ENCODE measurements at regions of chr20 and their contacts with region 1.

Region 1: DNA sequence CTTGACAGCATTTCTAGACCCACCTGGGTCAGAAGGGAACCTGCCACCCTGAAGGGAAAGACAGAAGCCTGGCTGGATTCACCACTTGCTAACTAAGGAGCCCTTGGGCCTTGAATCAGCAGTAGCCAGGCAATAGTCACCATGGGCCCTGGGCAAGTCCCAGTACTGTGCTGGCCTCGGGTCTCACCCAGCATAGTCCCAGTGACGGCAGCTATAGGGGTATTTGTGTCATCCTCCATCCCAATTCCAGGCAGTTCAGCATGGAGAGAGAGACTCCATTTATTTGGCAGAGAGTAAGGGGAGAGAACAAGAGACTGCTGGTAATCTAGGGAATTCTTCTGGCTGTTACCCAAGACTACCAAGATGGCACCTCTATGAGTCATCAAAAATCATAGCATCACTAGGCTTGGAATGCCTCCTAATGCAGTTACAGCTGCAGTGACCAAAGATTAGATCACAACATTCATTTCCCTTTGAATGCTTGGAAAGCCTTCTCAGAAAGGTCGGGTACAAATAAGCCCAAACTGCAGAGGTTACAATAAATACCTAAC is 660.3 kb upstream of the FLRT3 start:
- DNase-seq: no peak
- ATAC-seq: no peak
- H3K4me3 ChIP-seq: no peak overlapping the region
- H3K27ac ChIP-seq: no peak overlapping the region
- H3K4me1 ChIP-seq: no peaks in the 10 kb centered on the region
- H3K27me3 ChIP-seq: no peaks in the 10 kb centered on the region
- CTCF ChIP-seq: no peak

Region 2: DNA sequence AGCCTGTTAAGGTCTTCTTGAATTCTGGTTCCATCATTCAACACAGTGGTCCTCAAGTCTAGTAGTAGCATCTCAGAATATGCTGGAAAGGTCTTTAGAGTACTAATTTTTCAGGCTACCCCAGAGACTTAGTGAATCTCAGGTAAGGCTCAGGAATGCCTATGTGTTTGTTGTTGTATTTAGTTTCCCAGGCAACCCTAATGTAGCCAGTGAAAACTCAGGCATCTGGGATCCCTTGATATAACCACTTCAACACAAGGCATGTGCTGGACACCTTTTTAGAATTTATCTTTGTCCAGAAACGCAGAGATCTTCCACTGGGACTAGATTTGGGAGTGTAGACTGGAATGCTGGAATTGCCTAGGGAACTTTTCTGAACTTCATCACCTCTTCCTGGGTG is 62.4 kb before region 1 on chr20:
- intact Hi-C with region 1: no loop called
- DNase-seq: no peak
- ATAC-seq: no peak
- H3K4me3 ChIP-seq: no peak overlapping the region
- H3K27ac ChIP-seq: no peak overlapping the region
- H3K4me1 ChIP-seq: no peaks in the 10 kb centered on the region
- H3K27me3 ChIP-seq: no peaks in the 10 kb centered on the region
- CTCF ChIP-seq: no peak

Region 3: DNA sequence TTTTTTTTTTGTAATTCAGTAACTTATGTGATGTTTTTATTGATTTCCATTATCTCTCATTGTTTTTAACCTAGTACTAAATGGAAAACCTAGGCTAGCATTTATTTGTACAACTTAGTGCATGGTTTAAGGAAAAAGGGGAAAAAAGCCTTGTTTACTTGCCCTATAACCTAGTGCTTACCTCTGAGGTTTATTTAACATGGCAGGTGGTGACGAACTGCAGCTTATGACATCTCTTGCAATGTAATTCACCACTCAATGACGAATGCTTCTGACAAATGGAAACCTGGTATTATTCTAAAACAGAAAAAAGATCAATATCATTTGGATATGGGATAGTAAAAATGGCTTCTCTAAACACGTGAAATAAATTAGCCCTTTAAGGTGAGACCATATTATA is 41.7 kb before region 1 on chr20:
- intact Hi-C with region 1: loop called in 1 of 2 experiments (anchors 2 kb)
- DNase-seq: no peak
- ATAC-seq: no peak
- H3K4me3 ChIP-seq: no peak overlapping the region
- H3K27ac ChIP-seq: no peak overlapping the region
- H3K4me1 ChIP-seq: no peaks in the 10 kb centered on the region
- H3K27me3 ChIP-seq: no peaks in the 10 kb centered on the region
- CTCF ChIP-seq: no peak

Region 4: GRCh38 chr20:15022921-15023320 is 25.2 kb after region 1 on chr20:
- intact Hi-C with region 1: loop called in 1 of 2 experiments (anchors 2 kb)
- DNase-seq: no peak
- ATAC-seq: no peak
- H3K4me3 ChIP-seq: no peak overlapping the region
- H3K27ac ChIP-seq: no peak overlapping the region
- H3K4me1 ChIP-seq: no peaks in the 10 kb centered on the region
- H3K27me3 ChIP-seq: no peaks in the 10 kb centered on the region
- CTCF ChIP-seq: no peak